Activated CD8-positive, alpha-beta T cell treated with anti-CD3 and anti-CD28 coated beads for 36 hours (primary cell): ENCODE measurements at regions of chr12 and their contacts with region 1.

Region 1: GRCh38 chr12:53220801-53221202 is 11.2 kb downstream of the RARG start:
- DNase-seq: peak; percentile 92
- ATAC-seq: peak; percentile 65
- H3K4me3 Mint-ChIP-seq: peak overlapping the region; percentile 92
- H3K27ac Mint-ChIP-seq: peak overlapping the region; percentile 96
- H3K4me1 Mint-ChIP-seq: peaks cover 74% of the 10 kb centered on the region
- H3K27me3 Mint-ChIP-seq: no peaks in the 10 kb centered on the region
- CTCF ChIP-seq: no peak

Region 2: GRCh38 chr12:53180220-53180930 is 40.4 kb before region 1 on chr12 and contains the starts of genes CSAD and ZNF740:
- CTCF ChIA-PET with region 1: interaction called, 6 read pairs
- POLR2A ChIA-PET with region 1: interaction called, 14 read pairs
- intact Hi-C with region 1: no loop called
- DNase-seq: peak; percentile 99
- ATAC-seq: peak; percentile 95
- H3K4me3 Mint-ChIP-seq: peak within 1 kb of the TSS; percentile 89
- H3K27ac Mint-ChIP-seq: peak within 1 kb of the TSS; percentile 96
- H3K4me1 Mint-ChIP-seq: peaks cover 51% of the 10 kb centered on the region
- H3K27me3 Mint-ChIP-seq: no peaks in the 10 kb centered on the region
- CTCF ChIP-seq: no peak
- total RNA-seq, gene CSAD: 13.8 to 18.6 TPM
- total RNA-seq, gene ZNF740: 31.3 to 35.9 TPM

Region 3: DNA sequence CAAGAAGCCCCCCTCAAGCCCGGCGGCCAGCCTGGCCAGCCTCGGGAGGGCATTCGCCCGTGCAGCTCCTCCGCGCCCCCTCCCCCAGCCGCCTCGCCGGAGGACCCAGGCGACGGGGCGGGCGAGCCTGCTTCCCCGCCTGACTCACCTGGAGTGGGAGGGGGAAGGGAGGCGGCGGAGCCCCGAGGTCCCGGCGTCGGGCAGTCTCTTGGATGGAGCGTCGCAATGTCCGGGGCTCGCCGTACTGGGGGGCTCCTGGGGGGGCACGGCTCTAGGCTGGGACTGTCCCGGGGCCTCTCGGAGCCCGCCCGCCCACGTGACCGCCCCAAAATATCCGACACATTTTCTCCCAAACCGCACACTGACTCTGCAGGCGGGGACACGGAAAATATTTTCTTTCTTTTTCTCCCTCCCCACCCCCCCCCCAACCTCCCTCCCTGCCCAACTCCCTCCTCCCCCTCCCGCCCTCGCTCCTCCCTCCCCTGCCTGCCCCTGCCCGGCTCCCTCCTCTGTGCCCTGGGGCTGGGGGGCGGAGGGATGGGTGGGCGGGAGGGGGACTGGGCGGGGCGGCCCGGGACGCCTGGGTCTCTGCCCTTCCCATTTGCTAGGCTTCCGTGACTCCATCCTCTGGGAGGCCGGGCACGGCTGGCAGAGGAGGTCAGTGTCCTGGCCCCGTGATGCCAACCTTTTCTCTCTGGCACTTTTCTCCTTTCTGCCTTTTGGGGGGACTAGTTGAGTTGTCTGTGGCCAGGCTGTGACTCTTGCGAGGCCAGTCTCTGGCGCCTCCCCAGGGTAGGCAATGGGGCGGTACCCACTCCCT is 11.2 kb after region 1 on chr12 and contains the start of gene RARG:
- CTCF ChIA-PET with region 1: interaction called, 3 read pairs
- POLR2A ChIA-PET with region 1: interaction called, 47 read pairs
- intact Hi-C with region 1: no loop called
- DNase-seq: peak; percentile 76
- ATAC-seq: peak; percentile 74
- H3K4me3 Mint-ChIP-seq: peak within 1 kb of the TSS; percentile 81
- H3K27ac Mint-ChIP-seq: peak within 1 kb of the TSS; percentile 87
- H3K4me1 Mint-ChIP-seq: peaks cover 75% of the 10 kb centered on the region
- H3K27me3 Mint-ChIP-seq: no peaks in the 10 kb centered on the region
- CTCF ChIP-seq: no peak
- total RNA-seq, gene RARG: 19.7 to 20.3 TPM

Region 4: DNA sequence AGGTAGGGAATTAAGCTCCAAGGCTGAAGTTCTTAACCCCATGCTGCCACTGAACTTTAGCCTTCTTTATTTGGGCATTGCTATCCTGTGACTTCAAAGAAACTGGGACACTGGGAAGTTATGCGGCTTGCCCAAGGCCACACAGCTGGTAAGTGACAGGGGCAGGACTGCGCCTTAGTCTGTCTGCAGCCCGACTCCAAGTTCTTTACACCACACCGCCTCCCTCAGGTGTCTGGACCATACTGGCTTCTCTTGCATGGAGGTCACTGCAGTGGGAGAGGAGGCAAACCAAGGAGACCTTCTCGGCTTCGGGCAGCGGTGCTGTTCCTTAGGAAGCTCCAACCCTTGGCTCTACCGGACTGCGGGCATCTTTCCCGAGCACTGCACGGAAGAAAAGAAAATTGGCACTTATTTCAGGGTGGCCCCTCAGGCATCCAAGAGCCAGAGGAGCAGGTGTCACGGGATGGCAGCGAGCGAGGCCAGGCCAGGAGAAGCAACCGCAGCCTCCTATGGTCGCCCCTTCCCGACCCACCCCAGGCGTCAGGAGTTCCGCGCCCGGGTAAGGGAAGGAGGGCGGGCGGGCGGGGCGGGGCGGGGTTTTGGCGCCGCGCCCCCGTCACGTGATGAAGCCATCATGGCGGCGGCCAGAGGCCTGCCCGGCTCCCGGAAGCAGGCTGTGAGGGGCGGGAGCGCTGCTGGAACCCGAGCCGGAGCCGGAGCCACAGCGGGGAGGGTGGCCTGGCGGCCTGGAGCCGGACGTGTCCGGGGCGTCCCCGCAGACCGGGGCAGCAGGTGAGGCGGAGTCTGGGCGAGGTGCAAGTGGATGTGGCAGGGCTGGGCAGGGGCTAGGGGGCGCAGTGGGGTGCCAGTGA is 30.9 kb after region 1 on chr12:
- CTCF ChIA-PET with region 1: interaction called, 100 read pairs
- POLR2A ChIA-PET with region 1: interaction called, 5 read pairs
- intact Hi-C with region 1: no loop called
- DNase-seq: peak; percentile 81
- ATAC-seq: peak; percentile 90
- H3K4me3 Mint-ChIP-seq: peak overlapping the region; percentile 83
- H3K27ac Mint-ChIP-seq: peak overlapping the region; percentile 95
- H3K4me1 Mint-ChIP-seq: peaks cover 39% of the 10 kb centered on the region
- H3K27me3 Mint-ChIP-seq: no peaks in the 10 kb centered on the region
- CTCF ChIP-seq: peak; percentile 47

Region 5: GRCh38 chr12:53344824-53345485 is 124.2 kb after region 1 on chr12:
- CTCF ChIA-PET with region 1: interaction called, 13 read pairs
- POLR2A ChIA-PET with region 1: no interaction called
- intact Hi-C with region 1: no loop called
- DNase-seq: peak; percentile 85
- ATAC-seq: peak; percentile 86
- H3K4me3 Mint-ChIP-seq: peak overlapping the region; percentile 82
- H3K27ac Mint-ChIP-seq: peak overlapping the region; percentile 71
- H3K4me1 Mint-ChIP-seq: peaks cover 19% of the 10 kb centered on the region
- H3K27me3 Mint-ChIP-seq: peaks cover 3% of the 10 kb centered on the region
- CTCF ChIP-seq: peak; percentile 75